IMR-90 (cell line): ENCODE measurements at regions of chr11 and their contacts with region 1.

Region 1: GRCh38 chr11:36478700-36479329 is 31.3 kb downstream of the TRAF6 start:
- DNase-seq: peak; percentile 59
- ATAC-seq: peak; percentile 70
- H3K4me3 ChIP-seq: no peak overlapping the region
- H3K27ac ChIP-seq: no peak overlapping the region
- H3K4me1 ChIP-seq: no peaks in the 10 kb centered on the region
- H3K27me3 ChIP-seq: no peaks in the 10 kb centered on the region
- CTCF ChIP-seq: peak; percentile 85
- POLR2A ChIP-seq: no peak
- RAD21 ChIP-seq: peak; percentile 93

Region 2: DNA sequence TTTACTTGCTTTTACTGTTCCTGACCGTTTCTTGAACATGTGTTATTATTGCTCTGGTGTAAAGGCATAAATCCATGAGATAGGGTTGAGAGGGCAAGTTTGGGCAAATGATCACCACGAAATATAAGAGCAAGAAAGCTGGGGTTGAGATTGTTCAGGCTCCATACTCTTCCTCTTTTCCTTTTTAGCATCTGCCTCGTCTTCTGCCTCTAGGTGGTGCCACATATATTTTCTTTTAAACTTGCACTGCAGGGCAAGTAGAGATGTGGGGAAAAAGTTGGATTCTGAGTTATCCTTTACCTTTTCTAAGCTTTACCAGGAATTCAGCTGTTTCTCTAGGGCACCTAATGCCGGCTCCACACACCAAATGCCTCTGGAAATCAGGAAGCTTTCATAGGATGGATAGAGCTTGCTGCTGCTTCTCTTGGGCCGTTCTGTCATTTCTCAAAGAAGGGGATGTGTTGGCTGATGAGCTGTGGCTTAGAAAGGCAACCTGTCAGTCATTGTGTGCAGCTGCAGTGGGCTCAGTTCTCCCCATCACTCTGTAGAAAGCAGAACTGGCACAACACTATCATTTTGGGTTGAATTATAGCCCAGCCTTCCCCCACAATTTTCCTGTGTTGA is 436.7 kb before region 1 on chr11:
- CTCF ChIA-PET with region 1: no interaction called
- POLR2A ChIA-PET with region 1: no interaction called
- dilution Hi-C with region 1: no loop called
- in situ Hi-C with region 1: no loop called
- intact Hi-C with region 1: loop called (anchors 10 kb)
- DNase-seq: no peak
- ATAC-seq: peak; percentile 77
- H3K4me3 ChIP-seq: no peak overlapping the region
- H3K27ac ChIP-seq: no peak overlapping the region
- H3K4me1 ChIP-seq: no peaks in the 10 kb centered on the region; the same call in 1 of the 2 replicates
- H3K27me3 ChIP-seq: no peaks in the 10 kb centered on the region
- CTCF ChIP-seq: peak; percentile 62
- POLR2A ChIP-seq: no peak
- RAD21 ChIP-seq: peak; percentile 52

Region 3: DNA sequence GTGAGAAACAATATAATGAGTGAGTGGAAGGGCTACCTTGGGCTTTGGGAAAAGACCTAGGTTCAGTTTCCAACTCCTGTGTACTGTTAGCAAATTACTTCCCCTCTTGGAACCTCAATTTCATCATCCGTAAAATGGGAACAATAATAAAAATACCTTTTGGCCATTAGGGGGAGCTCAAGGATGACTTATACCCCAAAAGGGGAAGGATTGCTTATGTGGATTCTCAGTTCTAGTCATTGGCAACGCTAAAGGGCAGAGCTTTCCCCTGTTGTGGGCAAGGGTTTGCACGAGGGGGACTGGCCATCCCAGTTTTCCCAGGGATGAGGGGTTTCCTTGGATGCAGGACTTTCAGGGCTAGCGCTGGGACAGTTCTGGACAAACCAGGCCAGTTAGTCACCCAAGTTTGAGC is 186.5 kb before region 1 on chr11:
- CTCF ChIA-PET with region 1: interaction called, 66 read pairs
- POLR2A ChIA-PET with region 1: interaction called, 3 read pairs
- dilution Hi-C with region 1: loop called (anchors 10 kb)
- in situ Hi-C with region 1: loop called (anchors 5 kb)
- intact Hi-C with region 1: loop called (anchors 1 kb)
- DNase-seq: peak; percentile 47
- ATAC-seq: peak; percentile 47; the same call in 1 of the 2 replicates
- H3K4me3 ChIP-seq: no peak overlapping the region
- H3K27ac ChIP-seq: no peak overlapping the region
- H3K4me1 ChIP-seq: 0 out of 2 replicates have a peak, but pooled peaks cover 2% of the 10 kb centered on the region
- H3K27me3 ChIP-seq: no peaks in the 10 kb centered on the region
- CTCF ChIP-seq: peak; percentile 78
- POLR2A ChIP-seq: no peak
- RAD21 ChIP-seq: peak; percentile 87

Region 4: GRCh38 chr11:36376888-36377758 is 101.7 kb before region 1 on chr11:
- CTCF ChIA-PET with region 1: interaction called, 8 read pairs
- POLR2A ChIA-PET with region 1: no interaction called
- dilution Hi-C with region 1: no loop called
- in situ Hi-C with region 1: loop called (anchors 5 kb)
- intact Hi-C with region 1: loop called (anchors 1 kb)
- DNase-seq: peak; percentile 28
- ATAC-seq: peak; percentile 81
- H3K4me3 ChIP-seq: peak overlapping the region; percentile 83
- H3K27ac ChIP-seq: peak overlapping the region; percentile 16; the same call in 1 of the 2 replicates
- H3K4me1 ChIP-seq: peaks cover 3% of the 10 kb centered on the region
- H3K27me3 ChIP-seq: peaks cover 2% of the 10 kb centered on the region; the same call in 1 of the 2 replicates
- CTCF ChIP-seq: peak; percentile 60
- POLR2A ChIP-seq: peak; percentile 67
- RAD21 ChIP-seq: peak; percentile 49

Region 5: DNA sequence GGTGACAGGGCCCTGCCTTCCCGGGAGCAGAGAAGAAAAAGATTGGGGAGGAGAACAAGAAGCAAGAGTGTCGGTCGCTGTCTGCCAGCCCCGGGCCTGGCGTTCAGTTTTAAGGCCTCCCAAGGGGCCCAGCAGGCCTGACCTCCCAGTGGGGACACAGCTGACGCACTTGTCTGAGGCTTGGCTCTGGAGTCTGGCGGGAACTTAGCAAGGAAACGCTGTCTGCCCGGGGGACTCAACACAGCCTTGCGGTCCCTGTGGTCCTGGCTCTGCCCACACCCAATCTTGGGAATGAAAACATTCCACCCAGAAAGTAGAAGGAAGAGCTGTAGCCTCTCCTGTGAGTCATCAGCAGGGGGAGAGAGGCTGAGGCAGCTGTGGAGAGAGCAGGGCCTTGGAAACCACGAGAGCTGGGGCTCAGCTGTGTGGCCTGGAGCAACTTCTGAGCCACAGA is 23.1 kb before region 1 on chr11:
- CTCF ChIA-PET with region 1: interaction called, 10 read pairs
- POLR2A ChIA-PET with region 1: no interaction called
- dilution Hi-C with region 1: no loop called
- in situ Hi-C with region 1: no loop called
- intact Hi-C with region 1: no loop called
- DNase-seq: peak; percentile 98
- ATAC-seq: peak; percentile 96
- H3K4me3 ChIP-seq: no peak overlapping the region
- H3K27ac ChIP-seq: peak overlapping the region; percentile 95
- H3K4me1 ChIP-seq: peaks cover 34% of the 10 kb centered on the region
- H3K27me3 ChIP-seq: no peaks in the 10 kb centered on the region
- CTCF ChIP-seq: no peak
- POLR2A ChIP-seq: peak; percentile 58
- RAD21 ChIP-seq: peak; percentile 38

Region 6: GRCh38 chr11:36492724-36493304 is 14.0 kb after region 1 on chr11:
- CTCF ChIA-PET with region 1: interaction called, 12 read pairs
- POLR2A ChIA-PET with region 1: no interaction called
- dilution Hi-C with region 1: no loop called
- in situ Hi-C with region 1: no loop called
- intact Hi-C with region 1: no loop called
- DNase-seq: peak; percentile 63
- ATAC-seq: peak; percentile 71
- H3K4me3 ChIP-seq: no peak overlapping the region
- H3K27ac ChIP-seq: no peak overlapping the region
- H3K4me1 ChIP-seq: peaks cover 1% of the 10 kb centered on the region; the same call in 1 of the 2 replicates
- H3K27me3 ChIP-seq: no peaks in the 10 kb centered on the region
- CTCF ChIP-seq: peak; percentile 76
- POLR2A ChIP-seq: no peak
- RAD21 ChIP-seq: peak; percentile 82

Region 7: DNA sequence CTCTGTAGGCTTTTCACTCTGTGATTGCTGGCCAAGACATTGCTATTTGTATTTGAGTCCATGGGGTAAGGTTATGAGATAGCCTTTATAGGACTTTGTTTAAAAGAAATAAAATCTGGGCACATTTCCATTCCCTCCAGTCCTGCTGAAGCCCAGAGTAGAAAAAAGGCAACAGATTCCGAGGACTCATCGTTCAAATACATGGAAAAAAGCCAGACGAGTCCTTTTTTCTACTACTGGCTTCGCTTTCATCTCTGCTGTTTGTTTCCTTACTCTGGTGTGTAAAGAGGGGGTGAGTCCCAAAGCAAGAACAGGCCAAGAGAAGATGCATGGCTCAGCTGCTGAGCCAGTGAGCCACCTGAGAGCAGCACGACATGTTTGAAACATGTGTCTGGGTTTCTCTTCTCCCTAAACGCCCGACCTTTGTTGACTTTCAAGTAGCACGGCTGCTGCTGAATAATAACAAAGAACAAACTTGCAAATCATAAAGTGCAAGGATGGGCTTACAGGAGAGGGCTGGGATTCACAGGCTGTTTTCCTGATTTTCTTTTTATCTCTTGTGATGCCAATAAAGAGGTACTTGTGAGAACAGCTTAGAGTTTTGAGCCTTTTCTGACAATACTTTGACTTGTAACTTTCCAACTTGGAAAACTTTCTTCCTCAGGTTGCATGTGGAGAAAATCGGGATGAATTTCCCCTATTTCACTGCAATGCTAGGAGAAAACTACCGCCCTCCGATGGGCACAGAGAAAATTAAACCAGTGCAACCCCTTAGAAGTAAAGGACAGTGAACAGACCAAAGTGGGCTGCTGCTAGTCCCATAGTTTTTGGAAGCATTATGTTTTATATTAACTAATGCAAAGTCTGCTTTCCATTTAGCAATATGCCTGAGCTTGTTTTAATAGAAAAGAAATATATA is 314.4 kb after region 1 on chr11:
- CTCF ChIA-PET with region 1: no interaction called
- POLR2A ChIA-PET with region 1: no interaction called
- dilution Hi-C with region 1: no loop called
- in situ Hi-C with region 1: no loop called
- intact Hi-C with region 1: no loop called
- DNase-seq: no peak
- ATAC-seq: no peak
- H3K4me3 ChIP-seq: no peak overlapping the region
- H3K27ac ChIP-seq: no peak overlapping the region
- H3K4me1 ChIP-seq: no peaks in the 10 kb centered on the region
- H3K27me3 ChIP-seq: peaks cover 1% of the 10 kb centered on the region; the same call in 1 of the 2 replicates
- CTCF ChIP-seq: no peak
- POLR2A ChIP-seq: no peak
- RAD21 ChIP-seq: no peak

Region 8: GRCh38 chr11:37830529-37830928 is 1351.7 kb after region 1 on chr11:
- CTCF ChIA-PET with region 1: no interaction called
- POLR2A ChIA-PET with region 1: no interaction called
- dilution Hi-C with region 1: no loop called
- in situ Hi-C with region 1: no loop called
- intact Hi-C with region 1: no loop called
- DNase-seq: no peak
- ATAC-seq: no peak
- H3K4me3 ChIP-seq: no peak overlapping the region
- H3K27ac ChIP-seq: no peak overlapping the region
- H3K4me1 ChIP-seq: no peaks in the 10 kb centered on the region
- H3K27me3 ChIP-seq: no peaks in the 10 kb centered on the region
- CTCF ChIP-seq: no peak
- POLR2A ChIP-seq: no peak
- RAD21 ChIP-seq: no peak